HEK293 (cell line): ENCODE measurements at regions of chr18 and their contacts with region 1.

Region 1: DNA sequence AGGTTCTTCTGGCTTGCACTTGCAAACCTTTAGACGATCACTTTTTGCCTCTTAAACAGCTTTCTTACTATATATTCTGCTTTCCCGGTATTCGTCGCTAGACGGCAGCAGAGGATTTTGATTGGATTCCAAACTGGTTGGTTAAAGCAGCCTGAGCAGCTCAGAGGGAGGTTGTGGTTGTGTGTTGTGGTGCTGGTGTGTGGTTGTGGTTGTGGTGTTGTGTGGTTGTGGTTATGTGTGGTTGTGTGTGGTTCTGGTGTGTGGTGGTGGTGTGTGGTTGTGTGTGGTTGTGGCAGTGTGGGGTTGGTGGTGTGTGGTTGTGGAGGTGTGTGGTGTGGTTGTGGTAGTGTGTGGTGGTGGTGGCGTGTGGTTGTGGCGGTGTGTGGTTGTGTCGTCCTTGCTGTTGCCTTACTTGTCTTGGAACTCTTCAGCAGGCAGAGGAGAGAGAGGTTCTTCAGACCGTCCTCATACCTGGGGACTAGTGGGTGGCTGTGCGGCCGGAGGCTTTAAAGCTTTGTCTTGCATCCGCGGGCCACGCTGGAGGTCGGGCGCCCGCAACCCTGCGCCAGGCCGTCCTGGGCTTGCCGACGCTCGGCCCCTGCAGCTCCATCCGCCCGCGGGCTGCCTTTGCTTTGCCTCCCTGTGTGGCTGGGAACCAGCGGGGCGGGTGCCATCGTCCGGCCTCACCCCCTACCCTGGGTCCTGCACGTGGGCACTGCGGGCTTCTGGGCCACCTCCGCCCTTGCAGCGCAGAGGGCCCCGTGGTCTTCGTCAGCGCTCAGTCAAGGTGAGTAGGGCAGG is 190.8 kb downstream of the ARHGAP28 start:
- H3K4me3 ChIP-seq: no peak overlapping the region
- H3K27ac ChIP-seq: no peak overlapping the region
- H3K4me1 ChIP-seq: no peaks in the 10 kb centered on the region
- CTCF ChIP-seq: peak; percentile 84

Region 2: DNA sequence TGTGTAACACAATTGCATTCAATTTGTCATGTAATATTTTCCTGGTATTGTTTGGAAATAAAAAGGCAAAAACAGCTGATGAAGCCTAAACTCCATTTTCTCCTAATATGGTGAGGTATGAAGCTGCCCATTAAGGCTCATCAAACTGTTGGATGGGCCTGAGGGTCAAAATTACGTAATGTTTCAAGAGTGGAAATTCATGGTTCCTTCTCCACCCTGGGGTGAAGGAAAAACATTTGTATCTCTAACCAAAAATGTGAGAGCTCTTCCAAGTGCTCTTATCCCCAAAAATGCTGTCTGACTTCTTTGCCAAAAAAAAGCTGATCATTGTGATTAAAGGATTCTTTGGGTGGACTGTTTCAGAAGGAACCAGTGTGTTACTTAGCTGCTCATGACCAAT is 98.9 kb before region 1 on chr18:
- CTCF ChIA-PET with region 1: no interaction called
- POLR2A ChIA-PET with region 1: no interaction called
- H3K4me3 ChIP-seq: no peak overlapping the region
- H3K27ac ChIP-seq: no peak overlapping the region
- H3K4me1 ChIP-seq: no peaks in the 10 kb centered on the region
- CTCF ChIP-seq: no peak

Region 3: DNA sequence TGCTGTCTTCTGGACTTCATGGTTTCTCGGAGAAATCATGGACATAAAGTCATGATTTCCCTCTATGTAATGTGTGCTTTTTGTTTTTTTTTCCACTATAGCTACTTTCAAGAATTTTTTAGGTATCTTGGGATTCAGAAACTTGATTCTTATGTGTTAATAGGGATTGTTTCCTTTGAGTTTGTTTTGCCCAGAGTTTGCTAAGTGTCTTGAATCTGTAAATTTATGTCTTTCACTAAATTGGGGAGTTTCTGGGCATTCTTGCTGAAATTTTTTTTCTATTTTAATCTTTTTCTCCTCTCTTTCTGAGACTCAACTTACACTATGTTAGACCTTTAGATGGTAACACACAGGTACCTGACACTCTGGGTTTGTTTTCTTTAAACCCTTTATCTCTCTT is 14.6 kb after region 1 on chr18:
- CTCF ChIA-PET with region 1: interaction called, 14 read pairs
- POLR2A ChIA-PET with region 1: interaction called, 3 read pairs
- H3K4me3 ChIP-seq: no peak overlapping the region
- H3K27ac ChIP-seq: no peak overlapping the region
- H3K4me1 ChIP-seq: no peaks in the 10 kb centered on the region
- CTCF ChIP-seq: no peak

Region 4: GRCh38 chr18:7000484-7001096 is 80.3 kb after region 1 on chr18:
- CTCF ChIA-PET with region 1: interaction called, 42 read pairs
- POLR2A ChIA-PET with region 1: interaction called, 3 read pairs
- H3K4me3 ChIP-seq: no peak overlapping the region
- H3K27ac ChIP-seq: no peak overlapping the region
- H3K4me1 ChIP-seq: no peaks in the 10 kb centered on the region
- CTCF ChIP-seq: 0 out of 2 replicates have a peak, but pooled peaks have one; percentile 15

Region 5: GRCh38 chr18:7021994-7022840 is 101.9 kb after region 1 on chr18:
- CTCF ChIA-PET with region 1: interaction called, 150 read pairs
- POLR2A ChIA-PET with region 1: no interaction called
- H3K4me3 ChIP-seq: no peak overlapping the region
- H3K27ac ChIP-seq: no peak overlapping the region
- H3K4me1 ChIP-seq: no peaks in the 10 kb centered on the region
- CTCF ChIP-seq: peak; percentile 82

Region 6: GRCh38 chr18:7038330-7038851 is 118.1 kb after region 1 on chr18:
- CTCF ChIA-PET with region 1: interaction called, 12 read pairs
- POLR2A ChIA-PET with region 1: interaction called, 4 read pairs
- H3K4me3 ChIP-seq: peak overlapping the region; percentile 2; the same call in 1 of the 2 replicates
- H3K27ac ChIP-seq: peak overlapping the region; percentile 28; the same call in 1 of the 2 replicates
- H3K4me1 ChIP-seq: no peaks in the 10 kb centered on the region; the same call in 1 of the 2 replicates
- CTCF ChIP-seq: peak; percentile 60; the same call in 1 of the 2 replicates